Dorsolateral prefrontal cortex (tissue), 120 donors: ENCODE measurements at regions of chr12 and their contacts with region 1.

Region 1: DNA sequence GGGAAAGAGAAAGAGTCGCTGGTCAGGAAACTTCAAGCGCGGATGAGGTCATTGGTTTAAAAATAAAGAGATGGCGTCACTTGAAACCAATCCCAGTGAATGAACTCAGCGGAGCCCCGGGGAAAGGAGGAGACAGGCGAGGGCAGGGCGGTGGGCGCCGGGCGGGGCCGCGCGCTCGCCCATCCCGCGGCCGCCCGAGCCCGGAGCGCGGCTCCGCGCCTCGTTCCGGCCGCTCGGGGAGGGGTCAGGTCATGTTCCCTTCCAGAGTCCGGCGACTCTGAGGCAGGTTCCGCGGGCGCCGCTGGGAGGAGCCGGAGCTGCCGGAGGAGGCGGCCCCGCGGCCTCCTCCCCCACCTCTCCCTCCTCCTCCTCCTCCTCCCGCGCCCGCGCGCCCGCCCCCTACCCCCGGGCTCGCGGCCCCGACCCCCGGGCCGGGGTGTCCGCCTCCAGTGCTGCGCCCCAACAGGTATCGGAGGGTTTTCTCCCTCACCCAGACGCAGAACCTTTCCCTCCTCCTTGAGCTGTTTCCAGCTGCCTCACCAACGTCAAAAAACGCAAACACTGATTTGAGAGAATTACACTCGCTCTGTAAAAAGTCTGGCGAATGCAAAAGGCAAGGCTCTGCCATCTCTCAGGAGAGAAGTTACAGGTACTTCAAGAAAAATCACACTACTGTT is at the start of gene DUSP16:
- DNase-seq: peak; percentile 73 to 93 (median 88)
- H3K4me3 ChIP-seq: peak within 1 kb of the TSS; percentile 59 to 94 (median 80)
- H3K27ac ChIP-seq: peak within 1 kb of the TSS; percentile 93 to 100 (median 99)
- H3K27me3 ChIP-seq: no peaks in the 10 kb centered on the region
- CTCF ChIP-seq: peak in 37 of 56 donors; percentile 3 to 63 (median 36)
- total RNA-seq, gene DUSP16: 12.2 to 57.9 (median 21.4) TPM

Region 2: DNA sequence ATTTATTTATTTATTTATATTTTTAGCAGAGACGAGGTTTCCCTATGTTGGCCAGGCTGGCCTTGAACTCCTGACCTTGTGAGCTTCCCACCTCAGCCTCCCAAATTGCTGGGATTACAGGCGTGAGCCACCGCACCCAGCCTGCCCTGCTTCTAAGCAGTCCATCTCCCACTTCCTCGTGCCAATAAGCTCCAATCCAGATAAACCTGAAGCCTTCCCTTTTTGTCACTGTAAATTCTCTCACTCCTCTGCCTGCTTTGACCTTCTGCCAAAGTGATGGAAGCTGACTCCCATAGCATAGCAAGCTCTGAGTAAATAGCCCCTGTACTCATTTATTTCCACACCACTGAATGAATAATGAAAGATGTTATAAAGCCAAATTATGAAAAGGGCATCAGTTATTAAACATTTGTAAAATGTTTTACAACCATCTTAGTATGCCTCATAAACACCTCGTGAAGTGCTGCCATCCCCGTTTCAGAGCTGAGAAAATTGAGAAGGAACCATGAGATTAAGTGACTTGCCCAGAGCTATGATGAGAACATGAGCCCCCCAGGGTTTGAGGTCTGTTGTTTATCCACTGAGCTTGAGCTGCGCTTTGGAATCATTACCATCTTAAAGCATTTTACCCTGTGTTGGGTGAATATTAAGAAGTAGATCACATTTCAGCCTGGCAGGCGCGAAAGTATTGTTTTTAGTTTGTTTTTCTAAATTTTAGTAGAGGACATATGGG is 243.1 kb before region 1 on chr12:
- intact Hi-C with region 1: no loop called
- DNase-seq: no peak
- H3K4me3 ChIP-seq: peak overlapping the region in 30 of 59 donors; percentile 0 to 48 (median 17)
- H3K27ac ChIP-seq: peak overlapping the region in 39 of 59 donors; percentile 4 to 81 (median 39)
- H3K27me3 ChIP-seq: no peaks in the 10 kb centered on the region
- CTCF ChIP-seq: no peak

Region 3: GRCh38 chr12:12376646-12377448 is 185.9 kb before region 1 on chr12:
- intact Hi-C with region 1: loop called (anchors 5 kb)
- DNase-seq: peak in 1 of 10 donors; percentile 13
- H3K4me3 ChIP-seq: no peak overlapping the region
- H3K27ac ChIP-seq: peak overlapping the region in 53 of 59 donors; percentile 8 to 84 (median 55)
- H3K27me3 ChIP-seq: no peaks in the 10 kb centered on the region
- CTCF ChIP-seq: peak; percentile 68 to 96 (median 84)

Region 4: GRCh38 chr12:12474931-12475795 is 87.6 kb before region 1 on chr12:
- intact Hi-C with region 1: loop called (anchors 1 to 5 kb)
- DNase-seq: no peak
- H3K4me3 ChIP-seq: peak overlapping the region in 1 of 59 donors; percentile 13
- H3K27ac ChIP-seq: peak overlapping the region in 58 of 59 donors; percentile 22 to 95 (median 88)
- H3K27me3 ChIP-seq: no peaks in the 10 kb centered on the region
- CTCF ChIP-seq: no peak

Region 5: DNA sequence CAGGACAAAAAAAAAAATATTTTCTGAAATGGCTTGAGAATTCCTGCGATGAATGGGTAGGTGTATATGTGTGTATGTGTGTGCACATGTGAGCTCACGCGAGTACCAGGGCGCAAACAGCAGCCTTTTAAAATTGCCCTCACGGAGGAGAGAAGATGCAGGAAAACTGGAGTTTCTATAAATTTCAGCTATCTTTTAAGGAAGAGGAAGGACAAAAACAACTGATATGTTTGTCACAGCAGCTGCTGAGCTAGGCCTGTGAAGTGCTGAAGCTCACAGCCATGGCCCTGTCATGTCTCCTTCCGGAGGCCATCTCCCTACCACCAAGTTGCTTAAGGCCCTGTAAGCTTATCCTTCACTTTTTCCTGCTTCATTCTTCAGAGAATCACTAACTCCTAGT is 40.8 kb before region 1 on chr12:
- intact Hi-C with region 1: loop called in 1 of 2 experiments (anchors 2 kb)
- DNase-seq: no peak
- H3K4me3 ChIP-seq: peak overlapping the region in 15 of 59 donors; percentile 32 to 68 (median 61)
- H3K27ac ChIP-seq: peak overlapping the region in 58 of 59 donors; percentile 24 to 95 (median 85)
- H3K27me3 ChIP-seq: no peaks in the 10 kb centered on the region
- CTCF ChIP-seq: no peak

Region 6: DNA sequence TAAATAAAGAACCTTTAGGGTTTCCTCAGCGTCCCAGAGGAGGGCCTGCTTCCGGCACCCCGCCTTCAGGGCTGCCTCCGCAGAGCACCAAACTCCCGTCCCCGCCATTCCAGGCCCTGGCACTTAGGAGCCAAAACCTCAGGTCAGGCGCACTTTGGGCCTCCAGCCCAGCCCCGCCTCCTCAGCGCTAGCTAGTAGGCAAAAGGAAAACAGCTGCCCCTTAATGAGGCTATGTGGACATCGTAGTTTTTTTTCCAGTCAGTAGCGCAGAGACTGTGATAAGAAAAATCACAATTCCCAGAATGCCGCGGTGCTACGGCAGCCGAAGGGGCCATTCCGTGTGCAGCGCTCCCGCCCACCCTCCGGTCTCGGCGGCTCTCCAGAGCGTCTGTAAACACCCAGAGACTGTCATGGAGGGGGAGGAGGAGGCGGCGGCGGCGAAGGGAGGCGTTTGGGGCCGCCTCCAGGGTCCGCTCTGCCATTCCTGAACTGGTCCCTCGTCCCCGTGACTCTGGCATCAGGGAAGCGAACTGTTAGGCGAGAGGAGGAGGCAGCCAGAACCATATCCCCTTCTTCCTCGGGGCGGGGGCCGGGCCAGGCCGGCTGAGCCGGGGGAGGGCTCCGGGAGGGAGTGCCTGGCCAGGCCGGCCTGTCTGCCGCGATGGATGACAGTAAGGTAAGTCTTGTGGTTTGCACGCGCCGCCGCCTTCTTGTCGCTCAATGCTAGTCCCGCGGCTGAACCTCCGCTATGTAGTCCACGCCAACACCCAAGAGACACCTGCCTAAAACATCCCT is 49.0 kb after region 1 on chr12 and contains the start of gene CREBL2:
- intact Hi-C with region 1: loop called (anchors 2 kb)
- DNase-seq: peak; percentile 88 to 93 (median 92)
- H3K4me3 ChIP-seq: peak within 1 kb of the TSS; percentile 53 to 98 (median 82)
- H3K27ac ChIP-seq: peak within 1 kb of the TSS; percentile 86 to 100 (median 98)
- H3K27me3 ChIP-seq: no peaks in the 10 kb centered on the region
- CTCF ChIP-seq: peak in 35 of 56 donors; percentile 3 to 57 (median 29)
- total RNA-seq, gene CREBL2: 26.6 to 75.3 (median 48.9) TPM

Region 7: GRCh38 chr12:12636641-12637040 is 73.9 kb after region 1 on chr12:
- intact Hi-C with region 1: no loop called
- DNase-seq: no peak
- H3K4me3 ChIP-seq: no peak overlapping the region
- H3K27ac ChIP-seq: no peak overlapping the region
- H3K27me3 ChIP-seq: no peaks in the 10 kb centered on the region
- CTCF ChIP-seq: no peak

Region 8: DNA sequence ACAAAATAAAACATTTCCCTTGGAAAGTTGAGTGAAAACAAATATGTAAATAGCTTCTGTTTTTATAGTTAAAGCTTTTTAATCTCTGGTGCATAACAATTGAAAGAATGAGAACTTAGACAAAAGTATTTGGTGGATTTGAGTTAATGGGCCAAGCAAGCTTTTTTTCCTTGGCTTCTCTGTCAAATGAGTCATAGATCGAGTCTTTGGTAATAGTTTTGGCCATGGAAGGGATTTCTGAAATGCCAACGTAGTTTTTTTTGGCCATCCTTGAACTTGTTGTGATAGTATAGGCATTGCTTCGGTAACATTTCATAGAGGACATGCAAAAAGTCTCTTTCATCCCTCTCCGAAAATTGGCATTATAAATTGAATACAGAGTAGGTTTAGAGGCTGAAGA is 98.4 kb after region 1 on chr12:
- intact Hi-C with region 1: loop called (anchors 1 to 5 kb)
- DNase-seq: no peak
- H3K4me3 ChIP-seq: peak overlapping the region in 1 of 59 donors; percentile 22
- H3K27ac ChIP-seq: peak overlapping the region in 23 of 59 donors; percentile 1 to 83 (median 33)
- H3K27me3 ChIP-seq: no peaks in the 10 kb centered on the region
- CTCF ChIP-seq: no peak